Gastrocnemius medialis (tissue), 4 donors: ENCODE measurements at regions of chr5 and their contacts with region 1.

Region 1: DNA sequence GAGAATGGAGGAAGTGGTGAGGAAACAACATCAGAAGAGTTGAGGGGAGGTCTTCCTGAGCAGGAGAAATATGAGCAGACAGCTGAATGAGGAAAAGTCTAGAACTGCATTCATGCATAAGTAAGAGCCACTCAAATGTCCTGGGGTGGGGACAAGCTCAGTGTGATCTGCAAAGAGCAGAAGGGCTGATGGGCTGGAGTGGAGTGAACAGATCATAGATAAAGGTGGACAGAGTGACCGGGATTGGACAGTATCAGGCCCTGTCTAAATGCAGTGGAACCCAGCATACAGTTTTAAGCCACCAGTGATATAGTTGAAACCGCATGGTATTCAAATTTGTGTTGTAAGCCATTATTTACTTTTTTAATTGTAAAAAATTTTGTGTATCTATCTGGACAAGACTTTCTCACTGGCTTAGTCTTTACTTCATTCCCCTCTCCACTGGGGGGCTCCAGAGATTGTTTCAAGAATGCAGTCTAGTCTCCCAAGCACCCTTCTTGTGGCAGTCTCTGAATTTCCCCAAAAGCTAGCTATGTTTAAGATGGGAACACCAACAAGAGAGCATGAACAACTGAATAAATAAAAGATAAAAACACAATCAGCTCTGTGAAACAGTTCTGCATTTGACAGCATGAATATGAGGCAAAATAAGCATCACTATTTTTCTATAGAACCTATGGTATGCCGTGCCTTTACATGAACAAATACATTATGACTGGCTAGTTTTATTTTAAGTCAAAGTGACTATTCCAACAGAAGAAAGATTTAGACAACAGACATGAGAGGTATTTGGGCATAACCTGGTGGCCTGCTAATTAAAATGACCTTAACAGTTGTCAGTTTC is 10.7 kb upstream of the STK32A start:
- DNase-seq: no peak
- ATAC-seq: peak; percentile 56 to 69
- H3K4me3 ChIP-seq: no peak overlapping the region
- H3K27ac ChIP-seq: no peak overlapping the region
- H3K4me1 ChIP-seq: no peaks in the 10 kb centered on the region
- H3K27me3 ChIP-seq: no peaks in the 10 kb centered on the region
- CTCF ChIP-seq: peak; percentile 18 to 64 (median 46)
- POLR2A ChIP-seq: no peak

Region 2: DNA sequence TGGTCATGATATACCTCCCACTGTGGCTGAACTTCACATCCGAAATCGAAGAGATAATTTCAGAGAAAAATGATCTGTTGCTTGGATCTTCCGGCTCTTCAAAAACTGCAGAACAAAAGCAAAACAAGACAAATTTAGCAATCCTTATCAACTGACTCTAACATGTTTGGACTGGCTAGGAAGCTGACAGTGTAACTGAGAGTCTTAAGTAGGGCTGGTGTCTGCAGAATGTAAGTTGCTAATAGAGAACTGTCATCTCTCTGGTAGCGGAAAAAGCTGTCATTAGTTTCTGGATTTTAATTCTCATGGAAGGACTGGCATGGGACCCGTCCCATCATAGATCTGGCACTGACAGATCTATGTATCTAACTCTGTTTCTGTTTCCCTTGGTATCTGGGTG is 623.8 kb before region 1 on chr5:
- in situ Hi-C with region 1: no loop called
- intact Hi-C with region 1: no loop called
- DNase-seq: no peak
- ATAC-seq: no peak
- H3K4me3 ChIP-seq: no peak overlapping the region
- H3K27ac ChIP-seq: no peak overlapping the region
- H3K4me1 ChIP-seq: no peaks in the 10 kb centered on the region
- H3K27me3 ChIP-seq: no peaks in the 10 kb centered on the region
- CTCF ChIP-seq: no peak
- POLR2A ChIP-seq: no peak

Region 3: DNA sequence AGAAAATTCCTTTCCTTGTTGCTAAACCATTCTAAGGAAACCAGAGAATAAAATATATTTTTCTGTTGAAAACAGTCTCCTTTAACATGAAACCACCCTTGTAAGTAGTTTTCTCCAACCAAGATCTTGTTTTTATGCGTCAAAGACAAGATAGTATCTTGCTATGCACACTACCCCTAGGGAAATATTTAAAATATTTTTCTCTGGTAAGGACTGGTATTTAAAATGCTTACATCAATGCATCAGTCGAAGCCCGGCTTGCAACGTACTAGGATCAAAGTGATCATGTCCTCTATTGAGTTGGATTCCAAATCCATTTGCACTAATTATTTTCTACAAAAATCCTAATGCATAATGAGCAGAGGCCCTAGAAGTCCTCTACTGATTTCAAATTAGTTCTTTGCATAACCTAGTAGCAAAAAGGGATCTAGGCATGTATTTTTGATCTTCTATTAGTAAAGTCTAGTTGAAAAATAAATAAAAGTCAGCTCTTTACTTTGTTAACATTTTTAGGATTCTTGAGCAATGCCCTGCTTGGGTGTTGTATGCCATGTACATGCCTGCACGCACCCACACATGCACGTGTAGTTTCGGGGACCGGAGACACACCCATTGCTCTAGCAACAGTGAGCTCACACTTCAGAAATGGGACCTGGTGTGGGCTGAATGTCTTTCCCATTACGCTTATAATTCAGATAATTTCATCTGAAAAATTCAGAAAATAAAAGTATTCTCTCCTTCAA is 543.2 kb before region 1 on chr5:
- in situ Hi-C with region 1: no loop called
- intact Hi-C with region 1: no loop called
- DNase-seq: no peak
- ATAC-seq: no peak
- H3K4me3 ChIP-seq: no peak overlapping the region
- H3K27ac ChIP-seq: no peak overlapping the region
- H3K4me1 ChIP-seq: no peaks in the 10 kb centered on the region
- H3K27me3 ChIP-seq: no peaks in the 10 kb centered on the region
- CTCF ChIP-seq: no peak
- POLR2A ChIP-seq: no peak

Region 4: DNA sequence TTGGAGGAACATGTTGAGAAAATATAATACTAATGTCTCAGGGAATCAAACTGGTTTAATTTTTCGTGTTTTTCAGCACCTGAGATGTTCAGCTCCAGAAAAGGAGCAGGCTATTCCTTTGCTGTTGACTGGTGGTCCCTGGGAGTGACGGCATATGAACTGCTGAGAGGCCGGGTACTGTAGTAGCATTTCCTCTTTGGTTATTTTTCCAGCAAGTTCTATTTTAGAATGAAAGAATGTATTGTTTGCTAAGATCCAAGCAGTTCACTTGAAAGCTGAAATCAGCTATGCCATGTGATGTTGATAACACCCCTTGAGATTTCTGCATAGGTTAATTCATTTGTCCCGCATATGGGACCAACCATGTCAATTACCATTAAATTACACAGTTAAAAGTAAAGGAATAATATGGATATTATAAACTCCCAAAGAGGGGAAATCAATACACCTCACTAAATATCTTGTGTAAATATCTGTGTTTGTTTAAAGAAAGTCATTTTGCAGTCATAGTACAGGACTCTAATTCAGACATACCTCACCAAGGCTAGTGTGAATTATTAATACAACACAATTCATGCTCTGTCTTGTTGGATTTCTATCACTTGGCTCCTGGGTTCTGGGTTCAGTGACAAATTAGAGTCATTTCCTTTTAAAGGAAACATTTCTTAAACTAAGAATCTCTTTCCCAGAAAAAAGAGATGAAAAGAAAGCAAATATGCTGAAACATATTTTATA is 137.4 kb after region 1 on chr5:
- in situ Hi-C with region 1: loop called in 2 of 4 experiments (anchors 5 to 10 kb)
- intact Hi-C with region 1: no loop called
- DNase-seq: no peak
- ATAC-seq: no peak
- H3K4me3 ChIP-seq: no peak overlapping the region
- H3K27ac ChIP-seq: no peak overlapping the region
- H3K4me1 ChIP-seq: no peaks in the 10 kb centered on the region
- H3K27me3 ChIP-seq: no peaks in the 10 kb centered on the region
- CTCF ChIP-seq: no peak
- POLR2A ChIP-seq: no peak

Region 5: DNA sequence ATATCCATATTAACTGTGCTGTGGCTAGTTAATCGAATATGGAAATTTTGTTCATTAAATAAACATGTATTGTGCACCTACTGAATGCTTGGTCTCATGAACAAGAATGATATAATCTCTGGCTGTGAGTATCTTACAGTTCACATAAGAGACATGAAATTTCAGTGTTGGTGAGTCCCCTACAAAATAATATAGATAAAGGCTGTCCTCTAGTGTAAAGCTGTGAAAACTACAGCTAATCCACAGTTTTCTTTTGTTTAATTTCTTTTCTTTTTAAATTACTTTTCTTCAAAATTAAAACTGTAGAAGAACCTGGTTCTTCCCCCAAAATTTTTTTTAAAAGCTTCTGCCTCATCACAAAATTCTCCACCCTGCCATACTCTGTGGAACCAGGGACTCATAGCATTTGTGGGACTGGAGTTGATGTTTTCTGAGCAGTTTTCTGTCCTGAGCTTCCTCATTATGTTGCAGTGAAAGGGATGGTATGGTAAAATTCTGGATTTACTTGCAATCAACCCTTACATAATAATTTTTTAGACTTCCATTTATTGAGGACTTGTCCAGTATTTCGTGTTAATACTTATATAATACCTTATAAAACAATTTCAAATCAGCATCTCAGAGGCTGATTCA is 145.7 kb after region 1 on chr5:
- in situ Hi-C with region 1: loop called in 1 of 4 experiments (anchors 10 kb)
- intact Hi-C with region 1: loop called (anchors 2 kb)
- DNase-seq: no peak
- ATAC-seq: no peak
- H3K4me3 ChIP-seq: no peak overlapping the region
- H3K27ac ChIP-seq: no peak overlapping the region
- H3K4me1 ChIP-seq: no peaks in the 10 kb centered on the region
- H3K27me3 ChIP-seq: no peaks in the 10 kb centered on the region
- CTCF ChIP-seq: peak in 2 of 5 experiments; percentile 23 to 40
- POLR2A ChIP-seq: no peak

Region 6: DNA sequence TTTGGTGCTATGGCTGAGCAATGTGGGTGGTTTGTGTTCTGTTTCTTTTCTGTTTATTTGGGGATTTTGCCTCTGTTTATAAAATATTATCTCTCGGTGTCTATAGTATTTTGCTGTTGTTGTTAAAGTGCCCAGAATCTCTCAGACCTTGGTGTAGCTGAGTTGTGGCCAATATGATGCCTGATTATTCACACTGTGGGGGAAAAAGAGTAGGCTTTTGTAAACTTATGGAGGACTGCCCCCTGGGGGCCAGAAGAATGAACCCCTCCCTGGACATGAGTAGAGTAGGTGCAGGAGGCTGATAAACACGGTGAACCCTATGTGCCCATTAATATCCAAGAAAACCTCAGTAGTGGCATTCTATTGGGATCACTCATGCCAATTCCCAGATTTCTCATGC is 334.7 kb after region 1 on chr5:
- in situ Hi-C with region 1: loop called (anchors 10 kb)
- intact Hi-C with region 1: loop called (anchors 1 kb)
- DNase-seq: peak; percentile 11 to 40
- ATAC-seq: peak; percentile 87 to 92
- H3K4me3 ChIP-seq: no peak overlapping the region
- H3K27ac ChIP-seq: no peak overlapping the region
- H3K4me1 ChIP-seq: peaks cover 0 to 10% of the 10 kb centered on the region in 2 donors
- H3K27me3 ChIP-seq: no peaks in the 10 kb centered on the region
- CTCF ChIP-seq: peak; percentile 56 to 73 (median 66)
- POLR2A ChIP-seq: no peak

Region 7: GRCh38 chr5:147567917-147568598 is 343.9 kb after region 1 on chr5:
- in situ Hi-C with region 1: loop called in 2 of 4 experiments (anchors 10 kb)
- intact Hi-C with region 1: no loop called
- DNase-seq: no peak
- ATAC-seq: no peak
- H3K4me3 ChIP-seq: no peak overlapping the region
- H3K27ac ChIP-seq: no peak overlapping the region
- H3K4me1 ChIP-seq: no peaks in the 10 kb centered on the region
- H3K27me3 ChIP-seq: no peaks in the 10 kb centered on the region
- CTCF ChIP-seq: no peak
- POLR2A ChIP-seq: no peak